ENCODE measurements at regions of chr6 and their contacts with region 1.

Region 1: DNA sequence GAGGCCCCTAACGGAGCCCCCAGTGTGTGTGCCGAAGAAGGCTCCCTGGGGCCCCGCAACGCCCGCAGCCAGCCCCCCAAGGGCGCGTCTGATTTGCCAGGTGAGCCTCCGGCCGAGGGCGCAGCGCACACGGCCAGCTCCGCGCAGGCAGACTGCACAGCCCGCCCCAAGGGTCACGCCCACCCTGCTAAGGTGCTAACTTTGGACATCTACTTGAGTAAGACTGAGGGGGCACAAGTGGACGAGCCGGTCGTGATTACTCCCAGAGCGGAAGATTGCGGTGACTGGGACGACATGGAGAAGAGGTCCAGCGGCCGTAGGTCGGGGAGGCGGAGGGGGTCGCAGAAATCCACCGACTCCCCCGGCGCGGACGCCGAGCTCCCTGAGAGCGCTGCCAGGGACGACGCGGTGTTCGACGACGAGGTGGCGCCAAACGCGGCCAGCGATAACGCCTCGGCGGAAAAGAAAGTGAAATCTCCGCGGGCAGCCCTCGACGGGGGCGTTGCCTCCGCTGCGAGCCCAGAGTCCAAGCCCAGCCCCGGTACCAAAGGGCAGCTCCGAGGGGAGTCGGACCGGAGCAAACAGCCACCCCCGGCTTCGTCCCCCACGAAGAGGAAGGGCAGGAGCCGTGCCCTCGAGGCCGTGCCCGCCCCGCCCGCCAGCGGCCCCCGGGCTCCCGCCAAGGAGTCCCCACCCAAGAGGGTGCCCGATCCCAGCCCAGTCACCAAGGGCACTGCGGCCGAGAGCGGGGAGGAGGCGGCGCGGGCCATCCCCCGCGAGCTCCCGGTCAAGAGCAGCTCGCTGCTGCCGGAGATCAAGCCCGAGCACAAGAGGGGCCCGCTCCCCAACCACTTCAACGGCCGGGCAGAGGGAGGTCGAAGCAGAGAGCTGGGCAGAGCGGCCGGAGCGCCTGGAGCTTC is 117.0 kb downstream of the RTN4IP1 start:
- DNase-seq: peak; percentile 85
- H3K4me3 Mint-ChIP-seq: peak overlapping the region; percentile 93
- H3K27ac Mint-ChIP-seq: peak overlapping the region; percentile 92
- H3K4me1 Mint-ChIP-seq: peaks cover 56% of the 10 kb centered on the region
- H3K27me3 Mint-ChIP-seq: no peaks in the 10 kb centered on the region

Region 2: DNA sequence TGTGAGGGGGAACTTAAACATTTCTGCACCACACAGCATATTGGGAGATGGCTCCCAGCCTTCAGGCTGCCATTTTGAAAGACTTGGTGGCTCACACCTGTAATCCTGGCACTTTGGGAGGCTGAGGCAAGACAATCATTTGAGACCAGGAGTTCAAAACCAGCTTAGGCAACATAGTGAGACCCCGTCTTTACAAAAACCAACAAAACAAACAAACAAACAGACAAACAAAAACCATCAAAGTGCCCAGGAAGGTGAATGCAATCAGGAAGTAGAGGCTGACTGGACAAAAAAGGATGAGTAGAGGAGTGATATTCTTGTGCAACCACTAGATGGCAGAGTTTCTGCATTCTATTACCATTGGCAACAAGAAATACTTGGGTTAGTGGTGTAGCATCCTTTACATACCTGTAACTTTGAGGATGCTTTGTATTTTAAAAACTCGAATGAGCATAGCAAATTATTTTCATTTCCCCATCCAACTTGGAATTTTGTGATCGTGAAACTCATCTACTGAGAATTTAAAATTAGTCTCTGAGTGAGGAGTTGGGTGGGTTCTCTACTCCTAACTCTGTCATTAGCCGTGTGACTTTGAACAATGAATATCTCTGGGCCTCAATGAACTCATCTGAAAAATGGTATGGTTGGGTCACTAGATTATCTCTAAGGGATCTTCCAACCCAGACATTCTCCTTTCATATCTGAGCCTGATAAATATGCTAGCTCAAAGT is 67.4 kb before region 1 on chr6:
- CTCF ChIA-PET with region 1: interaction called, 21 read pairs
- POLR2A ChIA-PET with region 1: interaction called, 7 read pairs
- DNase-seq: no peak
- H3K4me3 Mint-ChIP-seq: no peak overlapping the region
- H3K27ac Mint-ChIP-seq: no peak overlapping the region
- H3K4me1 Mint-ChIP-seq: peaks cover 18% of the 10 kb centered on the region
- H3K27me3 Mint-ChIP-seq: peaks cover 33% of the 10 kb centered on the region

Region 3: GRCh38 chr6:106501960-106502371 is 10.3 kb before region 1 on chr6:
- CTCF ChIA-PET with region 1: no interaction called
- POLR2A ChIA-PET with region 1: interaction called, 14 read pairs
- DNase-seq: no peak
- H3K4me3 Mint-ChIP-seq: no peak overlapping the region
- H3K27ac Mint-ChIP-seq: no peak overlapping the region
- H3K4me1 Mint-ChIP-seq: peaks cover 2% of the 10 kb centered on the region
- H3K27me3 Mint-ChIP-seq: peaks cover 5% of the 10 kb centered on the region

Region 4: DNA sequence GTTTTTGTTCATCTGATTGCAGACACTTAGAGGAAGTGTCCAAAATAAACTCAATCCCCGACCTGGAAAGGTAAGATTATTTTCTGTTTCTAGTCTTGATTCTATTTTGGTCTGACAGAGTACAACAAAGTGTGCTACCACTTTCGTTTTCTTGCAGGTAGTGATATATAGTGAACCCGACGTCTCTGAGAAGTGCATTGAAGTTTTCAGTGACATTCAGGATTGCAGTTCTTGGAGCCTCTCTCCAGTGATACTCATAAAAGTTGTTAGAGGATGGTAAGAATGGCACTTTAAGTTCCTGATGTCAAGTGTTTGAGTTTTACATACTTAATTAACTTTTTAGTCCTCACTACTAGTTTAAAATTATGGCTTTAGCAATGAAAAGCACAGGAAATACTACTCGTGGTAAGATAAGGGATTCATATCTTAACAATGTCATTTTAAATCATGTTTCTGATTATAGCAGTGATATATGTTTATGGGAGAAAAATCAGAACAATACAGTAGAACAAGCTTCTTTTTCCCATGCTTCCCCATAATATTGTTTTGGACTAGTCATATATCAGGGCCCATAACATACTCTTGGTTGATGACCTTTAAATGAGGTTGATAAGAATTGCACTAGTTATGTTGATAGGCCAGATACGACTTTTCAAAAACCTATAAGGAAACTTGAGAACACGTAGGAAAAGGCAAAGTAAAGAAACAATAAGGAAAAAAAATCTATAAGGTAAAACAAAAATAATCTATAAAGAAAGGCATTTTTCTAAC is 13.0 kb after region 1 on chr6:
- CTCF ChIA-PET with region 1: interaction called, 147 read pairs
- POLR2A ChIA-PET with region 1: interaction called, 434 read pairs
- DNase-seq: no peak
- H3K4me3 Mint-ChIP-seq: peak overlapping the region; percentile 79
- H3K27ac Mint-ChIP-seq: peak overlapping the region; percentile 92
- H3K4me1 Mint-ChIP-seq: peaks cover 61% of the 10 kb centered on the region
- H3K27me3 Mint-ChIP-seq: no peaks in the 10 kb centered on the region

Region 5: DNA sequence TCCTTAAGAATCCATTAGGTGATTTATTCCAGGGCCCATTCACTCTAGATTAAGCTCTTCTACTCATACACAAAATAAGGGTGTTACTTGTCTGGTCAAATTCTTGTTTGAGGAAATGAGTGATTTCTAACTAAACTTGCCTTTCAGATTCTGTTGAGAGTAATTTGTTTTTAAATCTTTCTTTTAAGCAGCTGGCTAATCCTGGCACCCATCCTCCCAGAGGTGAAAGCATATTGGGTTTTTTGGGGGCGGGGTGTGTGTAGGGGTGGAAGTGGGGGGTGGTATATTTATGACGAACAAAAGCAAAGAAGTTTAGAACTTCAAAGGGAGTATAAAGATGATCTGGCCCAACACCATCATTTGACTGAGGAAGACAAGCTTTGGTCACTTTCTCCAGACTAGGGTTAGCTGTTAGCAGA is 22.3 kb after region 1 on chr6:
- CTCF ChIA-PET with region 1: interaction called, 44 read pairs
- POLR2A ChIA-PET with region 1: interaction called, 76 read pairs
- DNase-seq: no peak
- H3K4me3 Mint-ChIP-seq: peak overlapping the region; percentile 10
- H3K27ac Mint-ChIP-seq: peak overlapping the region; percentile 83
- H3K4me1 Mint-ChIP-seq: peaks cover 88% of the 10 kb centered on the region
- H3K27me3 Mint-ChIP-seq: no peaks in the 10 kb centered on the region

Region 6: GRCh38 chr6:106539936-106540335 is 27.6 kb after region 1 on chr6:
- CTCF ChIA-PET with region 1: interaction called, 44 read pairs
- POLR2A ChIA-PET with region 1: interaction called, 76 read pairs
- DNase-seq: no peak
- H3K4me3 Mint-ChIP-seq: no peak overlapping the region
- H3K27ac Mint-ChIP-seq: no peak overlapping the region
- H3K4me1 Mint-ChIP-seq: peaks cover 48% of the 10 kb centered on the region
- H3K27me3 Mint-ChIP-seq: no peaks in the 10 kb centered on the region

Region 7: GRCh38 chr6:106556368-106556960 is 44.2 kb after region 1 on chr6:
- CTCF ChIA-PET with region 1: interaction called, 18 read pairs
- POLR2A ChIA-PET with region 1: interaction called, 17 read pairs
- DNase-seq: no peak
- H3K4me3 Mint-ChIP-seq: no peak overlapping the region
- H3K27ac Mint-ChIP-seq: no peak overlapping the region
- H3K4me1 Mint-ChIP-seq: peaks cover 26% of the 10 kb centered on the region
- H3K27me3 Mint-ChIP-seq: no peaks in the 10 kb centered on the region